Activated CD4-positive, alpha-beta T cell treated with anti-CD3 and anti-CD28 coated beads for 36 hours (primary cell): ENCODE measurements at regions of chr22 and their contacts with region 1.

Region 1: GRCh38 chr22:38056969-38057891 is at the start of gene PICK1:
- DNase-seq: peak; percentile 92
- ATAC-seq: peak; percentile 93
- H3K4me3 Mint-ChIP-seq: peak within 1 kb of the TSS; percentile 88
- H3K27ac Mint-ChIP-seq: peak within 1 kb of the TSS; percentile 98
- H3K4me1 Mint-ChIP-seq: peaks cover 15% of the 10 kb centered on the region
- H3K27me3 Mint-ChIP-seq: no peaks in the 10 kb centered on the region
- total RNA-seq, gene PICK1: 14.9 to 17.2 TPM

Region 2: GRCh38 chr22:38398609-38399461 is 341.6 kb after region 1 on chr22:
- CTCF ChIA-PET with region 1: no interaction called
- POLR2A ChIA-PET with region 1: no interaction called
- intact Hi-C with region 1: loop called in 1 of 2 experiments (anchors 1 kb)
- DNase-seq: peak; percentile 92
- ATAC-seq: peak; percentile 67
- H3K4me3 Mint-ChIP-seq: peak overlapping the region; percentile 72
- H3K27ac Mint-ChIP-seq: peak overlapping the region; percentile 47
- H3K4me1 Mint-ChIP-seq: peaks cover 38% of the 10 kb centered on the region
- H3K27me3 Mint-ChIP-seq: no peaks in the 10 kb centered on the region

Region 3: DNA sequence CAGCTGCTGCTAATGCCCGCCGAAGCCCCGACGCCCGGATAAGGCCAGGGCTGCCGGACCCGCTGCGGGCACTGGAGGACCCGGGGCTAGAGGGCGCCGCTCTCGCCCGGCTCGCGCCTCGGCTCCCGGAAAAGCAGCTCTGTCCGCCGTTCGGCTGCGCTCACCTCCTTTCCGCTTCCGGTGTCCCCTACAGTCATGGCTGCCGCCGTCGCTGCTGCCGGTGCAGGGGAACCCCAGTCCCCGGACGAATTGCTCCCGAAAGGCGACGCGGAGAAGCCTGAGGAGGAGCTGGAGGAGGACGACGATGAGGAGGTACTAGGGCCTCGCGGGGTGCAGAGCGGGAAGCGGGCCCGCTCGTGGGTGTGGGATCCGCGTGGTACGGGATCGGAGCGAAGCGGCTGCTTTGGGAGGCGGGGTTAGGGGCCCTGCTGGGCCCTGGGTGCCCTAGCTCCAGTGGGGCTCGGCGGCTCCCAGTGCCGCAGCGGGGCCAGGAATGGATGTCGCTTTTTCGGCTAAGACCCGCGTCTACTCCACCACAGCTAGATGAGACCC is 624.6 kb after region 1 on chr22 and contains the start of gene TOMM22:
- CTCF ChIA-PET with region 1: no interaction called
- POLR2A ChIA-PET with region 1: no interaction called
- intact Hi-C with region 1: loop called in 1 of 2 experiments (anchors 1 kb)
- DNase-seq: peak; percentile 92
- ATAC-seq: peak; percentile 98
- H3K4me3 Mint-ChIP-seq: peak within 1 kb of the TSS; percentile 90
- H3K27ac Mint-ChIP-seq: peak within 1 kb of the TSS; percentile 98
- H3K4me1 Mint-ChIP-seq: peaks cover 20% of the 10 kb centered on the region
- H3K27me3 Mint-ChIP-seq: no peaks in the 10 kb centered on the region
- total RNA-seq, gene TOMM22: 146 to 155 TPM